ENCODE measurements at regions of chr4 and their contacts with region 1.

Region 1: DNA sequence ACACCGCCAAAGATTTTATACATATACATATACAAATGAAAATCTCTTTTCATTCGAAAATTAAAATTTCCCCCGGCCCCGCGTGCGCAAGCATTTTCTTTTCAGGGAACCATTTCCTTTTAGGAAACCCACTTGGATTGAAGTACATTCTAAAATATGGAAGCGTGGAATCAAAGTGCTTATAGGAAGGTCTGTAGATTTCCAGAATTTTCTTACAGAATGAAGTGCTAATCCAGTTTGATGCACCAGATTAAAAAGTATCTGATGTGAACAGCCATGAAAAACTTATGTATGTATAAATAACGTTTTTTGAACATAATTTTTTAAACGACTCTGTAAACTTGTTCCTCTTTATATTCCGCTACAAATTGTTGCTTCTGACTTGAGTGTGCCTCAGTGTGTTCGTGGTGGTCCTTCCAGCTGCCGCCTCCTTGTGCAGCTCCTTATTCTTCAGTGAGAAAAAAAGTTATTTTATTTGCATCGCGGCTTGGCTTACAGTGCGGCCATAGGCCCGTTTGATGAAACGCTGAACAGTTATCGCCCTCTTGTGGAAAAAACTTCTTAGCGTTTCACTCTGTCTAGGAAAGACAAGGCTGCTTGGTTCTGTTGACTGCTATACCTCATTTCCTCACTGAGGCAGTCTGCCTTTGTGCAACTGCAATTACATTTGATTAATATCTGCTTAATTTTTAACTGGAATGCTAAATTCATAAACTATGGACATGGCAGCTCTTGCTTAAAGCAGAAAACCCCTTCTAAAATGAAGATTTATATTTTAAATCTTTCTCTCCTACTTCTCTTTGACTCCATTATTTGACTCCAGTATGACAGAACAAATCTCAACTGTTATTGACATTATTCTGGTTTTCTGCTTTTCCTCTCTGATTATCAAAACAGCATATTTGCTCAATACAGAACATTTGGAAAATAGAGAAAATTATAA is 4.7 kb upstream of the NKX6-1 start:
- DNase-seq: no peak
- ATAC-seq: peak; percentile 55 to 65 (median 56)
- H3K4me3 ChIP-seq: no peak overlapping the region
- H3K27ac ChIP-seq: no peak overlapping the region
- H3K4me1 ChIP-seq: peaks cover 3% of the 10 kb centered on the region
- H3K27me3 ChIP-seq: peaks cover 7 to 89% (median 31%) of the 10 kb centered on the region in 3 donors
- CTCF ChIP-seq: peak; percentile 63

Region 2: GRCh38 chr4:83771113-83771705 is 732.6 kb before region 1 on chr4:
- intact Hi-C with region 1: loop called in 1 of 2 experiments (anchors 10 kb)
- DNase-seq: no peak
- ATAC-seq: peak in 1 of 4 donors; percentile 48
- H3K4me3 ChIP-seq: no peak overlapping the region
- H3K27ac ChIP-seq: no peak overlapping the region
- H3K4me1 ChIP-seq: no peaks in the 10 kb centered on the region
- H3K27me3 ChIP-seq: no peaks in the 10 kb centered on the region
- CTCF ChIP-seq: peak; percentile 46

Region 3: GRCh38 chr4:84470204-84470785 is 33.5 kb before region 1 on chr4:
- intact Hi-C with region 1: no loop called
- DNase-seq: no peak
- ATAC-seq: no peak
- H3K4me3 ChIP-seq: no peak overlapping the region
- H3K27ac ChIP-seq: no peak overlapping the region
- H3K4me1 ChIP-seq: no peaks in the 10 kb centered on the region
- H3K27me3 ChIP-seq: peaks cover 0 to 2% (median 0%) of the 10 kb centered on the region in 3 donors
- CTCF ChIP-seq: no peak